Dendritic cell treated with granulocyte-macrophage colony-stimulating factor and Interleukin-4, amounts not matched to agents 40 ng/mL and 50 ng/mL, for 4 days (primary cell): ENCODE measurements at regions of chr14 and their contacts with region 1.

Region 1: GRCh38 chr14:50231475-50232275 is at the start of gene SOS2:
- H3K4me3 Mint-ChIP-seq: peak within 1 kb of the TSS; percentile 86
- H3K27ac Mint-ChIP-seq: peak within 1 kb of the TSS; percentile 91
- H3K4me1 Mint-ChIP-seq: peaks cover 25% of the 10 kb centered on the region
- H3K27me3 Mint-ChIP-seq: no peaks in the 10 kb centered on the region

Region 2: DNA sequence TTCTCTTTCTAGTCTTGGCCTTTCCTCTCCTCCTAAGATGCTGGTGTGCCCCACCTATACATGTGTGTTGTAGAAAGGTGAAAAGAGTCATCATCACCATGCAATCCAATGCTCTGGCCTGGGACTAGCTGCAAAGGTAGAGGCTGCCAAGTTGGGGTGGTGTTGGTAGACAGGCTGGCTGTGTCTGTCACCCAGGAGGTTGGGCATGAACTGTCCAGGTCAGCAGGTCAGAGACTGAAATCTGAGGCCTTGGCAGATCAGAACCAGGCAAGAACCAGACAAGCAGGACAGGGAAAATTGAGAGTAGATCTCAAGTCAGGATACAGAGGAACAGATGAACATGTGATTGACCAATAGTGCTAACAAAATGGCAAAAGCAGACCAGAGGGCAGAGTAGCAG is 54.2 kb after region 1 on chr14:
- intact Hi-C with region 1: no loop called
- H3K4me3 Mint-ChIP-seq: no peak overlapping the region
- H3K27ac Mint-ChIP-seq: no peak overlapping the region
- H3K4me1 Mint-ChIP-seq: no peaks in the 10 kb centered on the region
- H3K27me3 Mint-ChIP-seq: no peaks in the 10 kb centered on the region

Region 3: GRCh38 chr14:50432131-50432530 is 200.5 kb after region 1 on chr14:
- intact Hi-C with region 1: no loop called
- H3K4me3 Mint-ChIP-seq: no peak overlapping the region
- H3K27ac Mint-ChIP-seq: no peak overlapping the region
- H3K4me1 Mint-ChIP-seq: no peaks in the 10 kb centered on the region
- H3K27me3 Mint-ChIP-seq: no peaks in the 10 kb centered on the region

Region 4: GRCh38 chr14:50830932-50831725 is 599.5 kb after region 1 on chr14 and contains the start of gene NIN:
- intact Hi-C with region 1: loop called (anchors 5 kb)
- H3K4me3 Mint-ChIP-seq: peak within 1 kb of the TSS; percentile 87
- H3K27ac Mint-ChIP-seq: peak within 1 kb of the TSS; percentile 93
- H3K4me1 Mint-ChIP-seq: peaks cover 53% of the 10 kb centered on the region
- H3K27me3 Mint-ChIP-seq: peaks cover 7% of the 10 kb centered on the region